ENCODE measurements at regions of chr11 and their contacts with region 1.

Region 1: DNA sequence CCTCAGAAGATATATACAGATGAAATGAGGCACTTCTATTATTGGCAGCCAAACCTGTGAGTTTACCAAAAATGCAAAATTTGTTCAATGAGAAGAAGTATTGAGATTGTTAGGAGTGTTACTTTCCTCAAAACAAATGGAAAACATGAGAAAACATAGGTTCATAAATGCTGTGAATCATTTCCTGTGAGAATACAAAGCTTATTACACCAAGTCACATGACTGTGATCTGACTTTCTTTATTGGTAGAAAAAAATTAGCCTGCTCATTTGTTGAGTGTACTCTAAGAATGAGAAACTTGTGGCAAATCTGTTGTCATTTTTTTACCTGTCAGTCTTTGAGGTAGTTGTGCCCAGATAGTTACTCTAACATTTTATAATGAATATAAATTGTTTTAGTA is 215.1 kb downstream of the TMEM135 start:
- DNase-seq: no peak
- H3K4me3 Mint-ChIP-seq: no peak overlapping the region
- H3K27ac Mint-ChIP-seq: peak overlapping the region; percentile 68
- H3K4me1 Mint-ChIP-seq: peaks cover 14% of the 10 kb centered on the region
- H3K27me3 Mint-ChIP-seq: no peaks in the 10 kb centered on the region

Region 2: GRCh38 chr11:87037450-87038234 is 215.2 kb before region 1 on chr11 and contains the start of gene TMEM135:
- intact Hi-C with region 1: loop called (anchors 10 kb)
- DNase-seq: peak; percentile 99
- H3K4me3 Mint-ChIP-seq: peak within 1 kb of the TSS; percentile 96
- H3K27ac Mint-ChIP-seq: peak within 1 kb of the TSS; percentile 93
- H3K4me1 Mint-ChIP-seq: peaks cover 51% of the 10 kb centered on the region
- H3K27me3 Mint-ChIP-seq: peaks cover 14% of the 10 kb centered on the region
- total RNA-seq, gene TMEM135: 26.2 and 28.6 TPM in 2 replicates

Region 3: DNA sequence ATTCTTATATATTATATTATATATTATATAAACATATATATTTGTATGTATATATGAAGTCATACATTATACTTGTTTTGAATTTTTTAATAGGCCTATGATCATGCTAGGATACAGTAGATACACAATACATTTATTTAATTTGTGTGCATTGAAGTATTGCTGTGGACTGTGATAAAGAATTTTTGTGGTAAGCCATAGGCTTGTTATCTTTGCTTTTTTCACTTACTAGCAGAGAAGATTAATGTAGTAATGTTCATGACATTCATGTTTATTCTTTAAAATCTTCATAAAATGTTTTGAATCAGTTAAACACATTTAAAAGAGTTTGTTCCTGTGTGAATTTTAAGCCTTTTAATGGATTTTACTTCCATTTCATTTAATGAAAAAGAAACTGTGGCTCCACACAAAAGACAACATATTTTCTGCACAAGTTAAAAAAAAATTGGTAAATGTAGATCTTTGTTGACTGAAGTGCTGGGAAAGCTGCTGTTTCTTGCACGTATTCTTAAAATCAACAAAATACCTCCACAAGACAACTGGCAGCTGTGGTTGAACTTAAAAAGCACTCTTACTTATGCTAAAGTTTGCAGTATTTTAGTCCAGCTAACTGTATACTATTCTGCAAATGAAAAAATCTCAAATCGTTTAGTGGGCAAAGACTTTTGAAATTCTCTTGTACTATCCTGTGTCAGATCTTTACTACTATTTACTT is 59.0 kb before region 1 on chr11:
- intact Hi-C with region 1: no loop called
- DNase-seq: no peak
- H3K4me3 Mint-ChIP-seq: no peak overlapping the region
- H3K27ac Mint-ChIP-seq: no peak overlapping the region
- H3K4me1 Mint-ChIP-seq: no peaks in the 10 kb centered on the region
- H3K27me3 Mint-ChIP-seq: no peaks in the 10 kb centered on the region

Region 4: DNA sequence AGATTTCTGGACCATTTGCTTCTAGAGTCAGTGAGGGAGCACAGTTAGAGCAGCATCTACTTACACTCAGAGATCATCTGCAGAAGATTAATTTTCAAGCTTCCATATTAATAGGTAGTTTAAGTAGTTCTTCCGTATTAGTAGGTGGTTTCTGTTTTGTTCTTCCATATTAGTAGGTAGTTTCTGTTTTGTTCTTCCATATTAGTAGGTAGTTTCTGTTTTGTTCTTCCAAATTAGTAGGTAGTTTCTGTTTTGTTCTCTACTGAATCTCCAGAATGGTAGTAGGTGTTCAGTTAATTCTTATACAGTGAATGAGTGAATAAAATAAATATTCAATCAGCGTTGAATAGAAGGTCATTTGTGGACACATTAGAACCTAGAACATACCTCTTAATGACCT is 39.4 kb before region 1 on chr11:
- intact Hi-C with region 1: loop called (anchors 2 kb)
- DNase-seq: no peak
- H3K4me3 Mint-ChIP-seq: peak overlapping the region; percentile 11
- H3K27ac Mint-ChIP-seq: no peak overlapping the region
- H3K4me1 Mint-ChIP-seq: peaks cover 14% of the 10 kb centered on the region
- H3K27me3 Mint-ChIP-seq: no peaks in the 10 kb centered on the region

Region 5: DNA sequence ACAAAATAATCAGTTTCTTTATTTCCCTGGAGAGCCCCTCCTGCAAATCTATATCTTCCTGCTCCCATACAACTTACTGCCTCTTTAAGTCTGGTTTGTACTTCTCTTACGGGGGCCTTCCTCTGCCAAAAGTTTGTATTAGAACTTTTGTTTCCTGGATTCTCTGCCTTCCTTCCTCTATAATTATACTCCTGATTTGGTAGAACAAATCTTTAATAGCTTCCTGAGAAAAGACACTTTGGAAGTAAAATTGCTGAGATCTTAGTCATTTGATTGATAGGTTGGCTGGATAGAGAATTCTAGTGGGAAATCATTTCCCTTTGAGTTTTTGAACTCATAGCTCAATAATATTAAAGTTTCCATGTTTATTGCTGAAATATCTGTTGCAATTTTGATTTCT is 423.1 kb after region 1 on chr11:
- intact Hi-C with region 1: no loop called
- DNase-seq: no peak
- H3K4me3 Mint-ChIP-seq: no peak overlapping the region
- H3K27ac Mint-ChIP-seq: no peak overlapping the region
- H3K4me1 Mint-ChIP-seq: no peaks in the 10 kb centered on the region
- H3K27me3 Mint-ChIP-seq: no peaks in the 10 kb centered on the region

Measured in activated CD4-positive, alpha-beta T cell treated with anti-CD3 and anti-CD28 coated beads, Interleukin-2, amount 10 ng/mL, durations not matched to agents 24 days and 14 days (primary cell).